Endothelial cell of umbilical vein (primary cell): ENCODE measurements at regions of chr5 and their contacts with region 1.

Region 1: DNA sequence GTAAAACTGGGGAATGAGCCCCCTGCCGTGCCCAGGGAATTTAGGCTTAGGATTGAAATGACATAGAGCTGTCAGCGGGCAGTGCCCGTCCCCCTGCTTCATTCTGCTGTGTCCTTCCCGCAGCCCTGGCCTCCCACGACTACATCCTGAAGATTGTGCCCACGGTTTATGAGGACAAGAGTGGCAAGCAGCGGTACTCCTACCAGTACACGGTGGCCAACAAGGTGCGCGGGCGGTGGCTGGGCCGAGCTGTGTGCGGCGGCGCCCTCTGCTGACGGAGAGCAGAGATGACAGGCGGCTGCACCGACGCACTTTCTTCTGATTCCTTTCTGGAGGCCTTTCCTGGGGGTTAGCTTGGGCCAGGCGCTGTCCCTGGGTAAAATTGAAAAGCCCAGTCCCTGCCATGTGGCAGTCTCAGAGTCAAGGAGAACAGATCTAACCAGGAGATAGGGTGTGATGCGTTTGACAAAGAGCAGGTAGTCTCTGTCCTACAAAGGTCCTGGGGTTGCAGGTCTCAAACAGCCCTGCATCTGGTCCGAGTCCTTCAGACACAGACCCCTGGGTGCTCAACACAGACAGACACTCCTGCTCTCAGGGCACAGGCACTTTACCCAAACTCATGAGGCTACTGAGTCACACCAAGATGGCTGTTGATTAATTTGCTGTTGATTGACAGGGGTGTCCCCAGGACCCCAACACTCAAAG is 26.8 kb upstream of the RPL26L1 start:
- DNase-seq: peak; percentile 65
- H3K4me3 ChIP-seq: no peak overlapping the region
- H3K27ac ChIP-seq: peak overlapping the region; percentile 74
- H3K4me1 ChIP-seq: peaks cover 31% of the 10 kb centered on the region
- H3K27me3 ChIP-seq: no peaks in the 10 kb centered on the region
- CTCF ChIP-seq: peak; percentile 96 to 97
- POLR2A ChIP-seq: no peak

Region 2: DNA sequence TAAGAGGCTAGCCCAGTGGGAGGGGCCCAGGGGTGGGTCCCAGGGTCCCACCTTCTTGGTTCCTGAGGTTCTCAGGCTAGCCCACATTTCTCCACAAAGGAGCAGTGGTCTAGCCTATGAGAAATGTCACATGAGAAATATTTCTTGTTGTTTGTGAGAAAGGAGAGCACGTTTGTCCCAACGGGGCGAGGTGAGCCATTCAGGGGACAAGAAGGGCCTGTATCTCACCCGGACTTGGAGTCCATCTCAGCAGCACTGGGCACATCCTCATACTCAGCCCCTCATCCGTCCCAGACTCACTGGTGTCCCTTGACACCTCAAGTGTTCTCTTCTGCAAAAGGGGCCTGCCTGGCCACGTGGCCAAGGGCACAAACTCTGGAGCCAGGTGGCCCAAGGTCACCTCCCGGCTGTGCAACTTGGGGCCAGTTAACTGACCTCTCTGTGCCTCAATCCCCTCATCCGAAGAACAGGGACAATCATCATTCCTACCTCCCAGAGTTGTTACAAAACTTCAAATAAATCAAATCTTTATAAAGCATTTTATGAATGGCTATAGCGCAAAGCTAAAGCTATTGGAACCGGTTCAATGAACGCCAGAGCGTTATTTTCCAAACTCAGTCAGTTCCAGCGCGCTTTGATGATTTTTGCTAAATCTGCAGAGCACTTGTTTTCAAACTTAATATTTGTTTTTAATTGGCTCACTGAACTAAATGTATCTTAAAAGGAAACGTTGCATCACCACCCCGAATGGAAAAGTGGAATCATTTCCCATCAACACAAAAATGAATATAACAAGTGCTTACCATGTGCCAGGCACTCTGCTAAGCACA is 210.9 kb before region 1 on chr5:
- CTCF ChIA-PET with region 1: interaction called, 61 read pairs
- POLR2A ChIA-PET with region 1: no interaction called
- dilution Hi-C with region 1: no loop called
- intact Hi-C with region 1: loop called (anchors 1 kb)
- DNase-seq: peak; percentile 95
- H3K4me3 ChIP-seq: no peak overlapping the region
- H3K27ac ChIP-seq: no peak overlapping the region
- H3K4me1 ChIP-seq: peaks cover 8% of the 10 kb centered on the region
- H3K27me3 ChIP-seq: no peaks in the 10 kb centered on the region
- CTCF ChIP-seq: no peak
- POLR2A ChIP-seq: no peak

Region 3: DNA sequence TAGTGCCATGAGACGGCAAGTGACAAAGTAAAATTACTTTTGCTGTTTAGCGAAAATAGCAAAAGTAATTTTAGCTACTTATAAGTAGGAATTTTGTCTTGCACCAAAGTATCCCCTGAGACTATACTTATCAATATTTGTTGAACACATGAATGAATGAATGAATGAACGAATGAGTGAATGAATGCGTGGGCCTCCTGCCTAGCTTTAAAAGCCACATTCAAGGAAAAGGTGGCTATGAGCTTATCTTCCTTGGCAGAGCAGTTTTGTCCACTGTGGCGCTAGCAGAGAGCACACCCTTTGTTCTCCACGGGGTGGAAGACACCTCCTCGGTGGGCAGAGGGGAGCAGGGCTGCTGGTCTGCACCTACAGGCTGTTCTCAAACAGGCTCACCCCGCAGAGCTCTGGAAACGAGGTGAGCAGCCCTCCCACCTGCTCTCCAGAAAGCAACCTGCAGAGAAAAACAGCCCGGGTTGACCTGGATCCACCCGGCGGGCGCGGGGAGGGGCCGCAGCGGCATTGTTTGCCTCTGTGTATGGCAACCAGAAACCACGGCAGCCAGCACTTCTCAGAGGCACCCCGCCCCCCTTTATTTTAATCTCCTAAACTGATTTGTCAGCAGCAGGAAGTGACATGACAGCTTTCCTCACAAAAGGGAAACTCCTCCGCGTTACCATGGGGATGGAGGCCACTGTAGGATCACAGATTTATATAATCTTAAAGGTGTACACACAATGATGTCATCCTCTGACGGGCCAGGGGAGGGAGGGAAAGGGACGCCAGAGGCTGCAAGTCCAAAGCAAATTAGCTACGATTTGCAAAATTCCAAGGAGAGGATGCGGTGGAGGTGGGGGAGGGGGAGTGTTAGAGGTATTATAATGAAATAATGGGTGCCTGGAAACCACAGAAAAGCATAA is 167.4 kb before region 1 on chr5:
- CTCF ChIA-PET with region 1: interaction called, 67 read pairs
- POLR2A ChIA-PET with region 1: interaction called, 21 read pairs
- dilution Hi-C with region 1: no loop called
- intact Hi-C with region 1: loop called (anchors 1 kb)
- DNase-seq: peak; percentile 99
- H3K4me3 ChIP-seq: peak overlapping the region in 2 of 3 experiments; percentile 16 to 28
- H3K27ac ChIP-seq: peak overlapping the region; percentile 92
- H3K4me1 ChIP-seq: peaks cover 44% of the 10 kb centered on the region
- H3K27me3 ChIP-seq: no peaks in the 10 kb centered on the region
- CTCF ChIP-seq: no peak
- POLR2A ChIP-seq: peak; percentile 16

Region 4: DNA sequence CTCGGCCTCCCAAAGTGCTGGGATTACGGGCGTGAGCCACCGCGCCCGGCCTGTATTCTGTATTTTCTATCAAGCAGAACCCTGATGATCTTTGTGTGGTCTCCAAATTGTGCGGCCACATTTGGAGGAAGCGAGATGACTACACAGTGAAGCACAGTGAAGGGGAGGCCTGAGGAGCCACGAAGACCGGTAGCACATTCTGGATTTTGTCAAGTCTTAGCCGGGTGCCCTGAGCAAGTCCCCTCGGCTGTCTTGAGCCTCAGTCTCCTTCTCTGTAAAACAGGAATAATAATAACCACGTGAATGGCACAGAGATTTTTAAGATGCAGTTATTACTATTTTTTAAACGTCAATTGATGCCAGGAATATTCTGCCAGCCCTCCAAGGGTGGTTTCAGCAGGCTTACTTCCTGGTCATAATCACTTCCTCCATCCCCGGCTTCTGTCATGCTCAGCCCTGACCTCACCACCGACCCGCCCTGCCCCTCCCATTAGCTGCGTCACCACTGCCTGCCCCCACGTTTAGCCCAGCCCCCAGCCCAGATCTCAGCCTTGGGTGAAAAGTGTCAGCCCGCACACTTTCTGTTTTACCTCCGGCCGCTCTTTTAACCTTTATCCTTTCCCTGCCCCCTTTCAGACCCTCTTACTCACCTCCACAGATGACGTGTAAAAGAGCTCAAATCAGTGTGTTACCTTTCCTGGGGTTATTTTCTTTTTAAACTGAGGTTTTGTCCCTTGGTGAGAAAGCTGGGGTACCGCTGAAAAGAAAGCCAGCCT is 125.4 kb before region 1 on chr5:
- CTCF ChIA-PET with region 1: no interaction called
- POLR2A ChIA-PET with region 1: no interaction called
- dilution Hi-C with region 1: no loop called
- intact Hi-C with region 1: loop called (anchors 1 kb)
- DNase-seq: peak; percentile 86
- H3K4me3 ChIP-seq: peak overlapping the region in 1 of 3 experiments; percentile 41
- H3K27ac ChIP-seq: peak overlapping the region; percentile 95
- H3K4me1 ChIP-seq: peaks cover 15% of the 10 kb centered on the region
- H3K27me3 ChIP-seq: no peaks in the 10 kb centered on the region
- CTCF ChIP-seq: no peak
- POLR2A ChIP-seq: peak; percentile 68

Region 5: DNA sequence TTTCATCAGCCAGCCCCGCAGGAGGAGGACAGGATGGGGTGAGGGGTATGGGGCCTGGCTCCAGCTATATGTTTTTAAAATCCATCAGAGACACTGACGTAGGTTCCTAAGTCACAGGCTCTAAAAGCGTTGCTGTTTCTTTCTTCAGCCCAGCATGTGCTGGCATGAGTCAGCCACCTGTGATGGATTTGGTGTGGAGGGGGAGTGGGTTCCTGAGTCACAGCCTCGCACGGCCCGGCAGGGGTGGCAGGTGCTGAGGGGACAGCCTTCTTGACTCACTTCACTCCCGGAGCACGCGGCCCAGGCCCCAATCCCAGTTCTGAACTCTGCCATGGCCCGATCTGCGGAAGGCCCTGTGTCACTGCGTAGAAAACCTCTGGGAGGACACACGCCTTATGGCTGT is 12.0 kb before region 1 on chr5:
- CTCF ChIA-PET with region 1: interaction called, 11 read pairs
- POLR2A ChIA-PET with region 1: no interaction called
- dilution Hi-C with region 1: no loop called
- intact Hi-C with region 1: no loop called
- DNase-seq: no peak
- H3K4me3 ChIP-seq: no peak overlapping the region
- H3K27ac ChIP-seq: no peak overlapping the region
- H3K4me1 ChIP-seq: no peaks in the 10 kb centered on the region
- H3K27me3 ChIP-seq: no peaks in the 10 kb centered on the region
- CTCF ChIP-seq: no peak
- POLR2A ChIP-seq: no peak